ENCODE measurements at regions of chr11 and their contacts with region 1.

Region 1: DNA sequence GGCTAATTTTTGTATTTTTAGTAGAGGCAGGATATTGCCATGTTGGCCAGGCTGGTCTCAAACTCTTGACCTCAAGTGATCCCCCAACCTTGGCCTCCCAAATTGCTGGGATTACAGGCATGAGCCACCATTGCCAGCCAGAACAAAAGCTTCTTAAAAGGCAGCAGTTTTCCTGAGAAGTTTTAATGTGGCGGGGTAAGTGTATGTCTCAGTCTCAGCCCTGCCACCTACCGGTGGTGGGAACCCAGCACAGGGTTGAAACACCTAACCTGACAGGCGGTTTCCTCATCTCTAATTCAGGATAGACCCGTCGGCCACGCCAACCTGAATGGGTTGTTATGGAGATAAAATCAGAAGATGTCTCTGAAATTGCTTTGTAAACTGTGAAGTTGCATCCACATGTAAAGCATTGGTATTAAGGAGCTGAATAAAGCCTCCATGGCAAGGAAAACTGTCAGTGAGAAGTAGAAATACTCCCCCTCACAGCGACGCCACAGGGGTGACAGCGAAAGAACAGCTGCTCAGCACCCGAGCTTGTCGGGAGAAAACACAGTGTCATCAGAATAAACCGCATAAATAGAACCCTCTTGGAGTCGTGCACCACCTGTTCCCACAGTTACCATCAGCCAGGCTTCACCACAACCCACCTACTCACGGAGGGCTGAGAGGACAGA is 165.9 kb upstream of the NCAM1 start:
- DNase-seq: no peak
- H3K4me3 ChIP-seq: no peak overlapping the region
- H3K27ac ChIP-seq: peak overlapping the region; percentile 83 to 87
- H3K4me1 ChIP-seq: peaks cover 4 to 17% of the 10 kb centered on the region in 2 donors
- H3K27me3 ChIP-seq: no peaks in the 10 kb centered on the region
- CTCF ChIP-seq: peak; percentile 42 to 60 (median 43)

Region 2: GRCh38 chr11:112588252-112588694 is 207.0 kb before region 1 on chr11:
- intact Hi-C with region 1: loop called (anchors 1 kb)
- DNase-seq: peak in 1 of 2 donors; percentile 77
- H3K4me3 ChIP-seq: no peak overlapping the region
- H3K27ac ChIP-seq: no peak overlapping the region
- H3K4me1 ChIP-seq: no peaks in the 10 kb centered on the region
- H3K27me3 ChIP-seq: no peaks in the 10 kb centered on the region
- CTCF ChIP-seq: peak; percentile 59 to 75 (median 64)

Region 3: DNA sequence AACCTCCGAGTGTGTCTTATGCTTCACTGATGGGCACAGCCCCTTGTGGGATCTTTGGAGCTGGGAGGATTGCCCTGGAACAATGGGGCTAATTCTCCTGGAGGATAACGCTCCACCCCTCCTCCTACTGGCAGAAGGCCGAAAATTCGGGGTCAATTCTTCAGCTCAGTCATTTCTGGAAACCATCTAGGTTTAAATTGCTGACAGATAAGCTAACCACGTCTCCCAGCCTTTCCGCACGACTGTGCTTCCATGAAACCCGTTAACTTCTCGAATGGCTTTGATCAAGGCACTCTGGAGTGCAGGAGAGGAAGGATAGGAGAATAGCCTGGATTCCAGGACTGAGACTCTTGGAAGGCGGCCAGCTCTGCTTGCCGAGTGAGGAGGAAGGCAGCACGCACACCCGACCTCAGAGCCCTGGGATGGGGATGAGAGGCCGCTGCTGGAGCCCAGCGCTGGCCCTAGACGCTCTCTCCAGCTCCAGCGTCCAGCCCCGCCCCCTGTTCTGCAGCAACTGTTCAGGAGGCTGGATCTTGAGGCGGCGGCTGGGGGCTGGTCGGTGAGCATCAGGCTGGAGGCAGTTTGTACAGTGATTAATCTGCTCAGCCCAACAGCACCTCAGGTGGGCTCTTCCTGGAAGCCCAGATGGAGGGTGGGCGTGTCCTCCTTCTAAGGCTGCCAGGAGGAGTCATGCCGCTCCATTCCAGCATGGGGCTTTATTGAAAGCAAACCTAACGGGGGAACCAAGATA is 10.8 kb before region 1 on chr11:
- intact Hi-C with region 1: loop called (anchors 1 kb)
- DNase-seq: no peak
- H3K4me3 ChIP-seq: peak overlapping the region; percentile 16 to 43
- H3K27ac ChIP-seq: peak overlapping the region; percentile 73 to 83
- H3K4me1 ChIP-seq: peaks cover 11 to 35% of the 10 kb centered on the region in 2 donors
- H3K27me3 ChIP-seq: no peaks in the 10 kb centered on the region
- CTCF ChIP-seq: no peak

Region 4: GRCh38 chr11:113014262-113015097 is 219.2 kb after region 1 on chr11:
- intact Hi-C with region 1: no loop called
- DNase-seq: no peak
- H3K4me3 ChIP-seq: no peak overlapping the region
- H3K27ac ChIP-seq: no peak overlapping the region
- H3K4me1 ChIP-seq: no peaks in the 10 kb centered on the region
- H3K27me3 ChIP-seq: no peaks in the 10 kb centered on the region
- CTCF ChIP-seq: no peak

Region 5: DNA sequence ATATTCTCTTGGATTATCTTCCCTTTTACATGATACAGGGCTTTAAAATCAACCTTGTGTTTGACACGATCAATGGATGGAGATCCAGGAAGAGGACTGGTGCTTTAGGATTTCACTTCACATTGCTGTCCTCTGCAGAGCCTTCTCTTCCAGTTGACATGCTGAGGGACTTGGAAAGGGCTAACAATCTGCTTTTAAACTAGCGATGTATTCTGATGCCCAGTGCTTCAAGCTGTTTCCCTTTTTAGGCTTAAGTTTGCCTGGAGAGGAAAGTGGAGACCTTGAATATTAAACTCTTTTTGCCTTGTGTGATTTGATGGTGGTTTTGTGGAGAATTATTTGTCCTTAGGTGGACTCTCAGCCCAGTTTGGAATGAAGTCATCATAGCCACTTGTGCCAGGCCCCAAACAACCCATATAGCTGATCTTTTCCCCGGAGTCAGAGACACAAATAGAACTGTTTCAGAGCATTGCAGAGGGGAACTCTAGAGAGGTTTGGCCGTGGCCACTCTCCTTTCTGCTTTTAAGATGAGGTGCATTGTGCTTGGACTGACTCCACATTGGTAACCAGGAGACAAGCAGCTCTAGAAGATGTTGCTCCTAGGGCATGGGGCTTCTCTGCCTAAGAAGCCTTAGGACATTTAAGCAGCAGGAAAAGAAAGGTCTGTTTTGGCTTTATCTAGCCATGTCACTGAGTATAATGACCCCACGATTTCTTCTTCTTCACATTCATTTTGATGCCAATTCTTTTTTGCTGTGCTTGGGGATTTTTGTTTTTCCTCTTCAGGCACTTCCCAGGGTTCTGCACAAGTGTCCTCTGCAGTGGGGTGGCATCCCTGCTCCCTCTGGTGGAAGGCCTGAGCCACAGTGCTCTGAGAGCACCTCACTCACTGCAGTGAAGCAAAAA is 318.8 kb after region 1 on chr11:
- intact Hi-C with region 1: loop called (anchors 10 kb)
- DNase-seq: peak in 1 of 2 donors; percentile 79
- H3K4me3 ChIP-seq: peak overlapping the region in 1 of 2 donors; percentile 5
- H3K27ac ChIP-seq: peak overlapping the region; percentile 17 to 72
- H3K4me1 ChIP-seq: peaks cover 0 to 12% of the 10 kb centered on the region in 2 donors
- H3K27me3 ChIP-seq: no peaks in the 10 kb centered on the region
- CTCF ChIP-seq: peak; percentile 62 to 73 (median 69)